ENCODE measurements at regions of chr2 and their contacts with region 1.

Region 1: GRCh38 chr2:233443468-233444183 is 89.3 kb downstream of the DGKD start:
- DNase-seq: peak; percentile 77 to 90
- ATAC-seq: peak; percentile 20 to 71 (median 66)
- H3K4me3 ChIP-seq: no peak overlapping the region
- H3K27ac ChIP-seq: no peak overlapping the region
- H3K4me1 ChIP-seq: peaks cover 17% of the 10 kb centered on the region
- H3K27me3 ChIP-seq: no peaks in the 10 kb centered on the region
- CTCF ChIP-seq: peak; percentile 82

Region 2: GRCh38 chr2:233353769-233354499 is 89.7 kb before region 1 on chr2 and contains the start of gene DGKD:
- intact Hi-C with region 1: loop called (anchors 2 to 5 kb)
- DNase-seq: peak; percentile 71 to 82
- ATAC-seq: peak; percentile 84 to 90 (median 85)
- H3K4me3 ChIP-seq: peak within 1 kb of the TSS; percentile 75
- H3K27ac ChIP-seq: peak within 1 kb of the TSS; percentile 72
- H3K4me1 ChIP-seq: peaks cover 45% of the 10 kb centered on the region
- H3K27me3 ChIP-seq: no peaks in the 10 kb centered on the region
- CTCF ChIP-seq: peak; percentile 41
- total RNA-seq, gene DGKD: 77.9 to 365 (median 244) TPM

Region 3: DNA sequence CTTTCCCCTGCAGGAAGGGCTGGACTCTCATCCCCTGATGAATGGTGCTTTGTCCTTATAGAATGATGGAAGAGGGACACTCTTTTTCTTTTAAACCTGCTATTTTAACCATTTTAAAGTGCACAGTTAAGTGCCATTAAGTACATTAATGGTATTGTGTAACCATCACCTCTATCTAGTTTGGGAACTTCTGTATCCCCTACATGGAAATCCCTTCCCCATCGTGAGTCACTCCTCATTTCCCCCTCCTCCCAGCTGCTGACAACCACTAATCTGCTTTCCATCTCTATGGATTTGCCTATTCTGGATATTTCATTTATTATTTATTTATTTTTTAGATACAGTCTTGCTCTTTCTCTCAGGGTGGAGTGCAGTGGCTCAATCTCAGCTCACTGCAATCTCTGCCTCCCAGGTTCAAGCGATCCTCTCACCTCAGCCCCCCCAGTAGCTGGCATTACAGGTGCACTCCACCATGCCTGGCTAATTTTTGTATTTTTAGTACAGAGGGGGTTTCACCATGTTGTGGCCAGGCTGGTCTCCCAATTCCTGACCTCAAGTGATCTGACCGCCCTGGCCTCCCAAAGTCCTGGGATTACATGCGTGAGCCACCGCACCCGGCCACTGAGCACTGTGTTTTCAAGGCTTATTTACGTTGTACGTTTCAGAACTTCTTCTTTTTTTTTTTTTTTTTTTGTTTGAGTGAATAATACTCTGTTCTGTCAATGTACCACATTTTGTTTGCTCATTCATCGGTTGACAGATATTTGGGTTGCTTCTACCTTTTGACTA is 73.5 kb before region 1 on chr2:
- intact Hi-C with region 1: no loop called
- DNase-seq: no peak
- ATAC-seq: no peak
- H3K4me3 ChIP-seq: no peak overlapping the region
- H3K27ac ChIP-seq: no peak overlapping the region
- H3K4me1 ChIP-seq: peaks cover 33% of the 10 kb centered on the region
- H3K27me3 ChIP-seq: no peaks in the 10 kb centered on the region
- CTCF ChIP-seq: no peak

Region 4: GRCh38 chr2:233404222-233404621 is 39.4 kb before region 1 on chr2:
- intact Hi-C with region 1: loop called (anchors 2 kb)
- DNase-seq: no peak
- ATAC-seq: peak; percentile 79 to 88 (median 82)
- H3K4me3 ChIP-seq: no peak overlapping the region
- H3K27ac ChIP-seq: no peak overlapping the region
- H3K4me1 ChIP-seq: peaks cover 9% of the 10 kb centered on the region
- H3K27me3 ChIP-seq: no peaks in the 10 kb centered on the region
- CTCF ChIP-seq: peak; percentile 69